Posterior cingulate gyrus (tissue), 11 donors: ENCODE measurements at regions of chr2 and their contacts with region 1.

Region 1: DNA sequence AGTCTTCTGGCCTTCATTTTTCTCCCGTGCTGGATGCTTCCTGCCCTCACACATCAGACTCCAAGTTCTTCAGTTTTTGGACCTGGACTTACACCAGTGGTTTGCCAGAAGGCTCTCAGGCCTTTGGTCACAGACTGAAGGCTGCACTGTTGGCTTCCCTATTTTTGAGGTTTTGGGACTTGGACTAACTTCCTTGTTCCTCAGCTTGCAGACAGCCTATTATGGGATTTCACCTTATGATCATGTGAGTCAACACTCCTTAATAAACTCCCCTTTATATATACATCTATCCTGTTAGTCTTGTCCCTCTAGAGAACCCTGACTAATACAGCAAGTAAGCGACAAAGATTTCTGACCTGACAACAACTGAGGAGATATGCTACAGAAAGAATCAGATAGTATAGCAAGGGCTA is 7.2 kb downstream of the CDC42EP3 start:
- DNase-seq: no peak

Region 2: GRCh38 chr2:37414470-37414949 is 249.7 kb before region 1 on chr2:
- intact Hi-C with region 1: loop called (anchors 10 kb)
- DNase-seq: no peak